HEK293T (cell line): ENCODE measurements at regions of chr4 and their contacts with region 1.

Region 1: DNA sequence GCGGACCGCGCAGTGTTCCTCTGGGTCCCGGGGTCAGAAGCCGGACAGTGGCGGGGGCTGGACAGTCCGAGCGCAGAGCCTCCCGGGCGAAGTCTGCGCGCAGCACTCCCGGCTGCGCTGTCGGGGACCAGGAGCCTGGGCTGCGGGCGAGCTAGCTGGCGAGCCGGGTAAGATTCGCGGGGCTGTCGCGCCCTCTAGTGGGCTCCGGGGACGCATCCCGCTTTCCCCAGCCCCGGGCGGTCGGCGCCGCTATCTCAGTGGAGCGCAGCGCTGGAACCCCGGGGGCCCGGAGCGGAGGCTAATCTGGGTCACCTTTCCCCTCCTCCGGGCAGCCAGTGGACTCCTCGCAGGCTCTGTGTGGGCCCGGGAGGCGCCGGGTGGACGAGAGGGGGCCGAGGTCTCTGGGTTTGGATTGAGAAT is 4.2 kb downstream of the PDGFRA start:
- DNase-seq: peak; percentile 82

Region 2: DNA sequence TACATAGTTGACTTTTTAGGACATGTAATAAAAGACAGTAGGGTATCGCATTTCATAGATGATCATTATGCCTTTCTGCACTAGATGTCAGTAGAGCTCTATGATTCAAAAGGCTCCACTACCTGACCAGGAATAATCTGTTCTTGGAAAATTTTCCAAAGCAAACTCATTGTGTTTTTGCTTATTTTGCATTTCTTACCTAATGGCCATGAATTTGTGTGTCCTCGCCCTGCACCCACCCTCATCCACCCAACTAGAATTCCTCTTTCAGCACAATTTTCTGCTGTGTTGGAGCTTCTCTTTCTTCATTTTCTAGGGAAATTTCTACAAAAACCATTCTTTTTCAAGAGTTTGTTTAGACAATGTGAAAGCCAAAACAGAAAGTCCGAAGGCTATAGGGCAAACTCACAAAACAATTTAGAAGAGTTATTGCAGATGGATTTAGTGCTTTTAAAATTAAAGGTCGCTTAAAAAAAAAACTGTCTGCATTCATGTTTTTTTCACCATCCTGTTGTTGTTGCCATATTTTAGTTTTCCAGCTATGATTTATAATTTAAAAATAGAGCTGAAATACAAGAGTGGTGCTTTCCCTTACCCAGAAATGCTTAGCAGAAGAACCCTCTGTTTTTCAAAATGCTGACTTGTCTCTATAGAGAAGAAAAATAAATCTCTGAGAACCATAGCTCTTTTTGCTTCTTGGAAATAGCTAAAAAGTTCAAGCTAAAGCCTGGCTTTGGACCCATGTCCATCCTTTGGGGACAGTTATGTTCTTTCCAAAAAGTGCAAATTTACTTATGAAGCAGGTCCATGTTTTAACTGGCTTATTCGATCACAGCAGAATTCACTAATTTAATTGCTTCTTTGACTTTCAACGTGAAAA is 1998.5 kb before region 1 on chr4:
- CTCF ChIA-PET with region 1: interaction called, 14 read pairs
- POLR2A ChIA-PET with region 1: no interaction called
- DNase-seq: peak; percentile 53

Region 3: GRCh38 chr4:53908661-53909078 is 324.6 kb before region 1 on chr4:
- CTCF ChIA-PET with region 1: interaction called, 19 read pairs
- POLR2A ChIA-PET with region 1: no interaction called
- DNase-seq: peak; percentile 63

Region 4: GRCh38 chr4:54149323-54149722 is 84.0 kb before region 1 on chr4:
- CTCF ChIA-PET with region 1: no interaction called
- POLR2A ChIA-PET with region 1: no interaction called
- DNase-seq: no peak

Region 5: DNA sequence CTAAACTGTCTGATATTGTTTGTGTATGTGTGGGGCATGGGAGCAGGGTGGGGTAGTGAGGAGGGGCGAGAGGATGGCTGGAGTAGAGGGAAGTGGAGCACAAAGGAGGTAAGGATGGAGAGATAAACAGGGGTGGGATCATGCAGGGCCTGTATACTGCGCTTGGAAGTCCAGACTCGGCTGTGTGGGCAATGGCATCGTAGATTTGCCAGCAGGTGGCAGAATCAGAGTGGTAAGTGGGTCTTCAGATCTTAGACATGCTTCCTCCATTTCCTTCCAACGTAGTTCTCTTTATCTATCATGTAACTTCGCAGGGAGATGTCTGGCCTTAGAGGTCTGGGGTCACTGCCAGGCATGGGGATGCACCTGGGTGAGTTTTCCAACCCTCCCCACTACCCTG is 151.3 kb after region 1 on chr4:
- CTCF ChIA-PET with region 1: no interaction called
- POLR2A ChIA-PET with region 1: no interaction called
- DNase-seq: no peak